ENCODE measurements at regions of chr4 and their contacts with region 1.

Region 1: DNA sequence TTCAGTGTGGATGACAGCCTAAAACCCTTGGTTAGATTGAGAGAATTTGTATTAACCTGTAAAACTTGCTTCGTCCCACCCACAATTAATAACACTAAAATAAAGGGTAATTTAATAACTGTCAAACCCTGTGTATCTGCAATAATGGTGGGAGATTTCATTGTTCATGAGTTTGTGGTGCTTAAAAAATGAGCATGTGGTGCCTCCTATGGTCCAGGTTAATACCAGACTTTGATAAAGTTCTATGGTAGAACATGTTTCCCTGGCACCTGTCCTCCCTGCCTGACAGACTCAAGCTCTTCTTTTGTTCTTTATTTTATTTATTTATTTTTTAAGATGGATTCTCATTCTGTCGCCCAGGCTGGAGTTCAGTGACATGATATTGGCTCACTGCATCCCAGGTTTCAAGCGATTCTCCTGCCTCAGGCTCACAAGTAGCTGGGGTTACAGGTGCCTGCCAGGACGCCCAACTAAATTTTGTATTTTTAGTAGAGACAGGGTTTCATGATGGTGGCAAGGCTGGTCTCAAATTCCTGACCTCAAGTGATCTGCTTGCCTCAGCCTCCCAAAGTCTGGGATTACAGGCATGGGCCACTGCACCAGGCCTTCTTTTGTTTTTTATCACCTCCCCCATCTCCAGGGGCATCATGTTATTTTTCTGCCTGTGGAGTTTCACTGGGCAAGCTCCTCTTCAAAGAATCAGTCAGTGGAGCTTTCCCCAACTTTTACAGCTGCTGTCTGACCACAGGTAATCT is 289.2 kb downstream of the NR3C2 start:
- DNase-seq: no peak
- H3K4me3 Mint-ChIP-seq: no peak overlapping the region
- H3K27ac Mint-ChIP-seq: no peak overlapping the region
- H3K4me1 Mint-ChIP-seq: no peaks in the 10 kb centered on the region
- H3K27me3 Mint-ChIP-seq: no peaks in the 10 kb centered on the region

Region 2: DNA sequence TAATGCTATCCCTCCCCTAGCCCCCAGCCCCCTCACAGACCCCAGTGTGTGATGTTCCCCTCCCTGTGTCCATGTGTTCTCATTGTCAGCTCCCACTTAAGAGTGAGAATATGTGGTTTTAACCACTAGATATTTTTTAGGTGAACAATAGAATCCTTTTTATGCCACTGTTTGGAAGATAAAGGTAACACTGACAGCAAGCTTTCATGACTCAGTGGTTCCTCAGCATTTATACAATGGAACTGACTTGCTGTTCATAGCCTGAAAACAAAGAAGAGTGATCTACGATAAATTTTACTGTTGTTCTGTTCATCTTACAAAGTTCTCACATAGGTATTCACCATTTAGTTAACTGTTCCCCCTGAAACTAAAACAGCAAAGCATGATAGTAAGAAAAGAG is 273.4 kb before region 1 on chr4:
- CTCF ChIA-PET with region 1: no interaction called
- intact Hi-C with region 1: no loop called
- DNase-seq: no peak
- H3K4me3 Mint-ChIP-seq: no peak overlapping the region
- H3K27ac Mint-ChIP-seq: no peak overlapping the region
- H3K4me1 Mint-ChIP-seq: no peaks in the 10 kb centered on the region
- H3K27me3 Mint-ChIP-seq: no peaks in the 10 kb centered on the region

Region 3: GRCh38 chr4:147984065-147984777 is 168.8 kb before region 1 on chr4:
- CTCF ChIA-PET with region 1: no interaction called
- intact Hi-C with region 1: loop called (anchors 5 kb)
- DNase-seq: peak; percentile 19
- H3K4me3 Mint-ChIP-seq: no peak overlapping the region
- H3K27ac Mint-ChIP-seq: no peak overlapping the region
- H3K4me1 Mint-ChIP-seq: peaks cover 9% of the 10 kb centered on the region
- H3K27me3 Mint-ChIP-seq: no peaks in the 10 kb centered on the region

Region 4: GRCh38 chr4:148225639-148226038 is 72.6 kb after region 1 on chr4:
- CTCF ChIA-PET with region 1: no interaction called
- intact Hi-C with region 1: no loop called
- DNase-seq: no peak
- H3K4me3 Mint-ChIP-seq: no peak overlapping the region
- H3K27ac Mint-ChIP-seq: no peak overlapping the region
- H3K4me1 Mint-ChIP-seq: peaks cover 6% of the 10 kb centered on the region
- H3K27me3 Mint-ChIP-seq: no peaks in the 10 kb centered on the region

Measured in activated naive CD4-positive, alpha-beta T cell treated with anti-CD3 and anti-CD28 coated beads for 36 hours (primary cell).